ENCODE measurements at regions of chr3 and their contacts with region 1.

Region 1: DNA sequence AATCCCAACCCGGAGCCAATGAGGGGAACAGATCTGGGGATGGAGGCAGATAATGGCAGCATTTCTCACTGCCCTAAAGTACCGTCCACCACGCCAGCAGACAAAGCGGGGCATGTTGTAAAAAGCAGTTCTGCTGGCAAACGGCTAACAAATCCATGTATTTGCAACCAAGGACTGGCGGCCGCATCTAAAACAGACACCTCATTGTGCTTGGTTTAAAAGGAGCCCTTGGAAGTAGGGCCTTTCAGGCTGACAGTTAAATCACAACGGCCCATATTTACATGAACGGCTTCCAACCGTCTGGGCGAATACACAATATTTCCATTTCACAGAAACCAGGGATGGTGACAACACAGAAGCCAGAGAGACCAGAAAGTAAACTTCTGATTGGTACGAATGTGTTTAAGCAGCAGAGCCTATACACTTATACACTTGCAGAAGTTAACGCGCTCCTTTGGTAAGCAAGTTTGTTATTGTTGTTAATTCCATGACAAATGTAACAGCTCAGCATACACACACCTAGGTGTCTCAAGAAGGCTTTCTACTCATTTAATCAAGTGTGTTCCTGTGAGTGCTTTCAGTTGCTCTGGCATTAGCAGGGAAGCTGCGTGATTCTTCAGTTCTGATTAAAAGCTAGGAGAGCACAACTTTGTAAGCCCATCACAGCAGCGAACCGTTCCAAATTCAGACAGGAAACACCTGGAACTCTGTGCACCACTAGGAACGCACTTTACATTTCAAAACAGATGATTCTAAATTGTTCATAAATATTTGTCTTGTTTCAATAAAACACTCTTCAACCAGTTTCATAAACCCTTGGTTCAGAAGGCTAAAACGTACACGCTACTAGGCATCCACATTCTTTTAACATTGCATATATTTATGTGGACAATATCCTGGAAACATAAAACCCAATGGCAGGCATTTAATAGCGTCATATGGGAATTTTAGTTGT is 112.9 kb downstream of the PDZRN3 start:
- DNase-seq: no peak
- H3K4me3 ChIP-seq: no peak overlapping the region
- H3K27ac ChIP-seq: no peak overlapping the region
- H3K4me1 ChIP-seq: no peaks in the 10 kb centered on the region
- H3K27me3 ChIP-seq: no peaks in the 10 kb centered on the region
- CTCF ChIP-seq: no peak
- POLR2A ChIP-seq: no peak

Region 2: GRCh38 chr3:73409118-73409763 is 102.6 kb before region 1 on chr3:
- intact Hi-C with region 1: no loop called
- DNase-seq: no peak
- H3K4me3 ChIP-seq: no peak overlapping the region
- H3K27ac ChIP-seq: no peak overlapping the region
- H3K4me1 ChIP-seq: no peaks in the 10 kb centered on the region
- H3K27me3 ChIP-seq: no peaks in the 10 kb centered on the region
- CTCF ChIP-seq: no peak
- POLR2A ChIP-seq: no peak

Region 3: DNA sequence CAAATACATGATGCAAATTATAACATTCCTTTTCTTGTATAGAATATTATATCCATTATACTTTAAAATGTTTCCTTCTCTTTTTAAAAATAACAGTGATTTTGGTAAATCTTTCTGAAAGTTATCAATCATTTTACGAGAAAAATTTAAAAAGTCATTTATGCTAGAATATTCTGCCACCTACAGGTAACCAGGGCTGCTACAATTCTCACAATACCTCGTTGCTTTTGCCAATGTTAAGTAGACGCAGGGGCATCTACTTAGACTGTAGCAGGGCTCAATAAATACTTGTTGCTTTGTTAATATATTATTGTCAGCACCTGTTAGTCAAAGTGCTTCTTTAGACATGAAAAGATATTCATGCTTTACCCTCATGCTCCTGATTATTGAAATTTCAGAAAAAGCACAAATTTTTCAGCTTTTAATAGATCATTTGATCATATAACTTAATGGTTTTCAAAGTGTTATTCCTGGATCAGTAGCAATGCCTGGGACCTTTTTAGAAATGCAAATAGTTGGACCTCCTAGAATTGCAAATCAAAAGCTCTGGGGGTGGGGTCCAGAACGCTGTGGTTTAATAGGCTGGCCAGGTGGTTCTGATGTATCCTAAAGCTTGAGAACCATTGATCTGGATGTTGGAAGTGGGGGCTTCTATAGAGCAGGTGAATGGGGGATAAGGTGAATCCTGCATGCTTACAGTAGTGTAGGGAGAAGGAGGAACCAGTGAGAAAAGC is 336.5 kb after region 1 on chr3:
- intact Hi-C with region 1: loop called (anchors 5 kb)
- DNase-seq: no peak
- H3K4me3 ChIP-seq: no peak overlapping the region
- H3K27ac ChIP-seq: no peak overlapping the region
- H3K4me1 ChIP-seq: no peaks in the 10 kb centered on the region
- H3K27me3 ChIP-seq: no peaks in the 10 kb centered on the region
- CTCF ChIP-seq: peak in 8 of 11 experiments; percentile 14 to 59 (median 33)
- POLR2A ChIP-seq: no peak